ENCODE measurements at regions of chr3 and their contacts with region 1.

Region 1: DNA sequence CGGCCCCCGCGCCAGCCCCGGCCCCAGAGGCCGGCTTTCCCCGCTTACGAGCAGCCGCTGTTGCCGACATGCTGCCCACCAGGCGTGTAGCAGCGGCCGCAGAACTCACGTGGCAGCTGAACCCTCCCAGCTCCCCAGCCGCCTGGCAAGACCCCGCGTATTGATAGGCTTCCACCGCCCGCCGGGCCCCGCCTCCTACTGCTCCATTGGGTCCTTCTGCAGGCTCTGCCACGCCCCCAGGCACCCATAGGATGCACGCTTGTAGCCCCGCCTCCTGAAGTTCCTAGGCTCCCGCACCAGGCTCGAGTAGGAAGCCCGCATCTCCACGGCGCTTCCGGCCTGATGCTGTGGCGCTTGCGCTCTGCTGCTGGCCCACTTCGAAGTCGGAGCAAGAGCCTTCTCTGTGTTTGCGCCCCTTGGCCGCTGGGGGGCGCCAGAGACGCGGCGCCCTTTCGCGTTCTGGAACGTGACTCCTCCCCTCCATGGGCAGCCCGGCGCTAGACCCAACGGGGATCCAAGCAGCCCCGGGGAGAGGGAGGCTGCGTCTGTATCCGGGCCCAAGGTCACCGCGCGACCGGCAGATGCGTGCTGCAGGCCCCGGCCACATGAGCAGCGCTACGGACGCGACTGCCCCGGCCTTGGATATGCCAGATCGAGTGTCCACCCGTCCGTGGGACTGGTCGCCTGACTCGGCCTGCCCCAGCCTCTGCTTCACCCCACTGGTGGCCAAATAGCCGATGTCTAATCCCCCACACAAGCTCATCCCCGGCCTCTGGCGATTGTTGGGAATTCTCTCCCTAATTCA is at the starts of genes PARP3 and RRP9:
- DNase-seq: peak; percentile 97 to 100 (median 99)
- ATAC-seq: peak; percentile 92
- H3K4me3 ChIP-seq: peak within 1 kb of the TSS; percentile 89
- H3K4me3 Mint-ChIP-seq: peak within 1 kb of the TSS; percentile 95
- H3K27ac ChIP-seq: peak within 1 kb of the TSS; percentile 39 to 71
- H3K27ac Mint-ChIP-seq: peak within 1 kb of the TSS; percentile 81
- H3K4me1 ChIP-seq: peaks cover 32% of the 10 kb centered on the region
- H3K4me1 Mint-ChIP-seq: peaks cover 36% of the 10 kb centered on the region
- H3K27me3 ChIP-seq: no peaks in the 10 kb centered on the region
- H3K27me3 Mint-ChIP-seq: no peaks in the 10 kb centered on the region
- CTCF ChIP-seq: peak; percentile 95
- total RNA-seq, gene PARP3: 5.8 to 6.4 TPM
- total RNA-seq, gene RRP9: 6.4 to 7.6 TPM

Region 2: DNA sequence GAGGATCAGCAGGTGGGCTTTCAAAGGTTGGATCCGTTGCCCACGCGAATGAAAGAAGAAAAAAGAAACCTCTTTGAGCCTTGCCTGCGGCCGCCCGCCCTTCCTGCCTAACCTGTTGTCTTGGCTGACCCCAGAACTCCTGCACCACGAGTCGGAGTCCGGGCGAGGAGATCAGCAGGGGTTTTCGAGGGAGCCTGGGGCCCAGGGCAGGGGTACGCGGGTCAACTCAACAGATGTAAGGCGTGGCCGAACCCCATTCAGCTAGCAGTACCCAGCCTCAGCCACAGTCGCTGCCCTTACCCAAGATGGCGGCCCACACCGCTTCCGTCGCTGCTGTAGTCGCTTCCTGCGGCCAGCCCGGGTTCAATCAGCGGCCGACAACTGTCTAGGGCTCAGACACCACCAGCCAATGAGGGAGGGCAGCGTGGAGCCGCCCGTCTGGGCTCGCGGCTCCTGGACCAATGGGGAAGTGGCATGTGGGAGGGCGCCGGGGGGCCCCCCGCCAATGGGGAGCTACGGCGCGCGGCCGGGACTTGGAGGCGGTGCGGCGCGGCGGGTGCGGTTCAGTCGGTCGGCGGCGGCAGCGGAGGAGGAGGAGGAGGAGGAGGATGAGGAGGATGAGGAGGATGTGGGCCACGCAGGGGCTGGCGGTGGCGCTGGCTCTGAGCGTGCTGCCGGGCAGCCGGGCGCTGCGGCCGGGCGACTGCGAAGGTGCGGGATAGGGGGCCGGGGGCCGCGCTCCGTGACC is 557.1 kb before region 1 on chr3 and contains the start of gene MANF:
- CTCF ChIA-PET with region 1: no interaction called
- POLR2A ChIA-PET with region 1: no interaction called
- intact Hi-C with region 1: loop called in 1 of 2 experiments (anchors 10 kb)
- DNase-seq: peak; percentile 93 to 99 (median 95)
- ATAC-seq: peak; percentile 95
- H3K4me3 ChIP-seq: peak within 1 kb of the TSS; percentile 99
- H3K4me3 Mint-ChIP-seq: peak within 1 kb of the TSS; percentile 99
- H3K27ac ChIP-seq: peak within 1 kb of the TSS; percentile 84 to 96
- H3K27ac Mint-ChIP-seq: peak within 1 kb of the TSS; percentile 99
- H3K4me1 ChIP-seq: peaks cover 47% of the 10 kb centered on the region
- H3K4me1 Mint-ChIP-seq: peaks cover 55% of the 10 kb centered on the region
- H3K27me3 ChIP-seq: no peaks in the 10 kb centered on the region
- H3K27me3 Mint-ChIP-seq: no peaks in the 10 kb centered on the region
- CTCF ChIP-seq: no peak
- total RNA-seq, gene MANF: 26.4 to 30.2 TPM

Region 3: GRCh38 chr3:51974963-51975851 is 33.2 kb after region 1 on chr3 and contains the start of gene ABHD14A:
- CTCF ChIA-PET with region 1: interaction called, 17 read pairs
- POLR2A ChIA-PET with region 1: interaction called, 10 read pairs
- intact Hi-C with region 1: loop called (anchors 1 kb)
- DNase-seq: peak; percentile 48 to 92 (median 67)
- ATAC-seq: peak; percentile 67
- H3K4me3 ChIP-seq: peak within 1 kb of the TSS; percentile 63
- H3K4me3 Mint-ChIP-seq: peak within 1 kb of the TSS; percentile 97
- H3K27ac ChIP-seq: peak within 1 kb of the TSS; percentile 57 to 79
- H3K27ac Mint-ChIP-seq: peak within 1 kb of the TSS; percentile 92
- H3K4me1 ChIP-seq: peaks cover 61% of the 10 kb centered on the region
- H3K4me1 Mint-ChIP-seq: peaks cover 44% of the 10 kb centered on the region
- H3K27me3 ChIP-seq: no peaks in the 10 kb centered on the region
- H3K27me3 Mint-ChIP-seq: no peaks in the 10 kb centered on the region
- CTCF ChIP-seq: no peak
- total RNA-seq, gene ABHD14A: 9.5 to 10.6 TPM

Region 4: DNA sequence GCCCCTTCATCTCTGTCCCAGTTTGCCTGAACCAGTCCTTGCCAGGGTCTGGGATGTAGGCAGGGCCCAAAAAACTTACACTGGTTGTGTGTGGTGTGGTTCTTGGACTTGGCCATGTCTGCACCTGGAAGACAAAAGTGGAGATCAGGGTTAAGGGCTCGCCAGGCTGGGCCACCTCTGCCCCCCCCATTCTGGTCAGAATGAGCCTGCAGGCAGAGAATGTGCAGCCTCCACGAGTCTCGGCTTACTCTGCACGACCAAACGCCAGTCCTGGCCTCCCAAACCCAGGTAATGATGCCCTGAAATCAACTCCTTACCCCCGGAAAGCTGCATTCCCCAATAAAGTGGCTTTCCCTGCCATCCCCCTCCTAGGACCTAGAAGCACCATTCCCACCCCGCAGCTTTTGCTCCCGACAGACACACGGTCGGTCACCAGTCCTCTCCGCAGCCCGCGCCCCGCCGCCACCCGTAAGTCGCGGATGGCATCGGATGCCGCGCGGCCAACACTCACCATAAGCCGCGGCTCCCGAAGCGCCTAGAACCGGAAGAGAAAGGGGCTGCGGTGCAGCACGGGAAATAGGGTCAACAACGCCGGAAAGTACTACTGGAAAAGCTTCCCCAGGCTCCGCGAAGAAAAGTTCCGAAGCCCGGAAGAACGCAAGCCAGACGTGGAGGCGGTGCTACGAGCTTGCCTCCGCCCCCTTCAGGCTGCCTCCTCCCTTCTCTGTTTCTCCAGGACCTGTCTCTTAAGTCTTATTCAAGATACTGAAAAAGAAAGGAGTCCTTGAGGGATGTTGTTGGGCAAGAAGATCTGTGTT is 53.6 kb after region 1 on chr3 and contains the start of gene RPL29:
- CTCF ChIA-PET with region 1: interaction called, 18 read pairs
- POLR2A ChIA-PET with region 1: interaction called, 35 read pairs
- intact Hi-C with region 1: loop called (anchors 1 kb)
- DNase-seq: peak; percentile 87 to 97 (median 91)
- ATAC-seq: peak; percentile 98
- H3K4me3 ChIP-seq: peak within 1 kb of the TSS; percentile 88
- H3K4me3 Mint-ChIP-seq: peak within 1 kb of the TSS; percentile 99
- H3K27ac ChIP-seq: peak within 1 kb of the TSS; percentile 88 to 95
- H3K27ac Mint-ChIP-seq: peak within 1 kb of the TSS; percentile 97
- H3K4me1 ChIP-seq: peaks cover 40% of the 10 kb centered on the region
- H3K4me1 Mint-ChIP-seq: peaks cover 31% of the 10 kb centered on the region
- H3K27me3 ChIP-seq: no peaks in the 10 kb centered on the region
- H3K27me3 Mint-ChIP-seq: no peaks in the 10 kb centered on the region
- CTCF ChIP-seq: no peak
- total RNA-seq, gene RPL29: 1,843 to 1,901 TPM

Region 5: DNA sequence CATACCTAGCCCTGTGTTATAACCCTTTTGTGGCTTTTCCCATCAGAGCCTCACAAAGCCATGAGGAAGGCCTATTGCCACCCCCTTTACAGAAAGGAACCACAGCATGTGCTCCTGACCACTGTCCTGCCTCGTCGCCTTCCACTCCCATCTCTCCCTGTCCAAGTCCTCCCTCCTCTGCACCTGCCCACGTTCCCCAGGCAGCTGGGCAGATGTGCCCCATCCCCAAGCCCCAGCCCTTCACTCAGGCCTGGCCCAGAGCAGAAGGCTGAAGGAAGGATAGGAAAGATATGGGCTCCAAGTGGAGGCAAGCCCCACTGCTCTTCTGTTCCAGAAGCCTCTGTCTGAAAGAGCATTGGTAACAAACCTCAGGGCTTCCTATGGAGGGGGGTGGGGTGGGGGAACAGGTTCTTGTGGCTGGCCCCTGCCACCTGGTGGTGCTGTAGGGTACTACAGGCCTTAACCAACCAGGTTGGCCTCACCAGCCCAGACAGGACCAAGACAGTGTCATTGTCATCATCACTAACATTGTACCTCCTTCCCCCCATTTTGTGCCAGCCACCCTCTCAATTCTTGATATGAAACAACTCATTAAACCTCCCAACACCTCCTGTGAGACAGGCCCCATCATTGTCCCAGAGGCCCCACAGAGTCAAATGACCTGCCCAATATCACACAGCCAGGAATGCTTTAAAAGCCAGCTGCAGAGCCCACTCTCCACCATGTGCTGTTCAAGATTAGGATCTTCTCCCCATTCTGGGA is 202.2 kb after region 1 on chr3:
- CTCF ChIA-PET with region 1: no interaction called
- POLR2A ChIA-PET with region 1: interaction called, 3 read pairs
- intact Hi-C with region 1: loop called (anchors 1 to 2 kb)
- DNase-seq: peak; percentile 79 to 93 (median 87)
- ATAC-seq: peak; percentile 100
- H3K4me3 ChIP-seq: no peak overlapping the region
- H3K4me3 Mint-ChIP-seq: no peak overlapping the region
- H3K27ac ChIP-seq: no peak overlapping the region
- H3K27ac Mint-ChIP-seq: no peak overlapping the region
- H3K4me1 ChIP-seq: peaks cover 12% of the 10 kb centered on the region
- H3K4me1 Mint-ChIP-seq: peaks cover 8% of the 10 kb centered on the region
- H3K27me3 ChIP-seq: no peaks in the 10 kb centered on the region
- H3K27me3 Mint-ChIP-seq: no peaks in the 10 kb centered on the region
- CTCF ChIP-seq: peak; percentile 92